ENCODE measurements at regions of chr6 and their contacts with region 1.

Region 1: DNA sequence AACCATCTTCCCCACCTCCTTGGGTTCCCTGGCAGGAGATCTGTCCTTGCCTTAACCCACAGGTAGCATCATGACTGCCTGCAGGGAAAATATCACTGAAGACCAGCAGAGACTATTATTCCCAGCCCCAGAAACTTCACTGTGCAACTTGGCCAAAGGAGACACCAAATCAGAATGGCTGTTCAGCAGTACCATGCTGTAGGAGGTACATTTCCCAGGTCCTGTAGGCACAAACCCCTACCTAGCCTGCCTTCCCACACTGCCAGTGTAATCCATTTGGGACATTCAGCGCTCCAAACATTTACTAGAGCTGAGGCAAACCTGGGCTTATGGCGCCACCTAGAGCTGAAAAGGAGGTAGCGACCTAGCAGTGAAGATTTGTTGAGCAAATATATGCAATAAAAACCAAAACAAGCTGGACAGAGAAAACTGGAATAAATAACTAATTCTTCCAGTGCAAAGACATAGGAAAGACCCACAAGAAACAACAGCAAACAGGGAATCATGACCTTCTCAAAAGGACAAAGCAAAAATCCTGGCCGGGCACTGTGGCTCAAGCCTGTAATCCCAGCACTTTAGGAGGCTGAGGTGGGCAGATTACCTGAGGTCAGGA is 60.3 kb downstream of the VTA1 start:
- DNase-seq: peak; percentile 53
- ATAC-seq: peak; percentile 45
- H3K4me3 Mint-ChIP-seq: no peak overlapping the region
- H3K27ac Mint-ChIP-seq: peak overlapping the region; percentile 53
- H3K4me1 Mint-ChIP-seq: no peaks in the 10 kb centered on the region
- H3K27me3 Mint-ChIP-seq: no peaks in the 10 kb centered on the region
- CTCF ChIP-seq: peak; percentile 77

Region 2: GRCh38 chr6:141704151-141704550 is 503.2 kb before region 1 on chr6:
- CTCF ChIA-PET with region 1: no interaction called
- POLR2A ChIA-PET with region 1: no interaction called
- intact Hi-C with region 1: no loop called
- DNase-seq: no peak
- ATAC-seq: no peak
- H3K4me3 Mint-ChIP-seq: no peak overlapping the region
- H3K27ac Mint-ChIP-seq: no peak overlapping the region
- H3K4me1 Mint-ChIP-seq: no peaks in the 10 kb centered on the region
- H3K27me3 Mint-ChIP-seq: no peaks in the 10 kb centered on the region
- CTCF ChIP-seq: no peak

Region 3: DNA sequence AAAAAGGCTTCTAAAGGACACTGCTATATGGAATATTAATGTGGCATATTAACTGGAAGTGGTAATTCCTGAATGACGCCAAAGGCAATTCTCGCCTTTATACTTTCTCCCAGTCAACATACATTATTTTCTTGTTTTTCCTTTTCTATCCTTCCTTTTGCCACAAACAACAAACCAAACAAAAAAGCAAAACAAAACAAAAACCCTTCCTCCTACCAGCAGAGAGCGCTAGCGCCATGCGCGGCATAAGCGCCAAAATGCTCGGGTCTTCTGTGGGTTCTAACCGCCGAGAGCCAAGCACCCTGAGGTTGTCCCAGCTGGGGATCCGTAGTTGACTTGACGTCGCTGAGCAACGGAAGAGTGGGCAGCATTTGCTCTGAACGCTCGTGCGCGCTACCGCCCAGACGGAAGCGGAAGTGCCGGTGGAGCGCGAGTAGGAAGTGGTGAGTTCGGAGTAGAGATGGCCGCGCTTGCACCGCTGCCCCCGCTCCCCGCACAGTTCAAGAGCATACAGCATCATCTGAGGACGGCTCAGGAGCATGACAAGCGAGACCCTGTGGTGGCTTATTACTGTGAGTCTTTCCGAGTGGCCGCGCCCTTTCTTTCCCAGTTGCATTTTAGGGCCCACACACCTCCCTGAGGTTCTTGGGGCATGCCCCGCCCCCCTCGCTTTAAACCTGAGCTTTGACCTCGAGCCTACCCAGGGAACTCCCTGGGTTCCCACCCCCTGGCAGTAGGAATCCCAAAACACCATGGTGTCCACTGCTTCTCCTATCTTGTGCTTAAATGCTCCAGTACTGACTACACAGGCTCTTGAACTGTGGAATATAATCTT is 60.3 kb before region 1 on chr6 and contains the starts of genes NMBR and VTA1:
- CTCF ChIA-PET with region 1: interaction called, 27 read pairs
- POLR2A ChIA-PET with region 1: no interaction called
- intact Hi-C with region 1: loop called (anchors 2 kb)
- DNase-seq: peak; percentile 98
- ATAC-seq: peak; percentile 98
- H3K4me3 Mint-ChIP-seq: peak within 1 kb of the TSS; percentile 96
- H3K27ac Mint-ChIP-seq: peak within 1 kb of the TSS; percentile 91
- H3K4me1 Mint-ChIP-seq: peaks cover 46% of the 10 kb centered on the region
- H3K27me3 Mint-ChIP-seq: no peaks in the 10 kb centered on the region
- CTCF ChIP-seq: peak; percentile 92
- total RNA-seq, gene NMBR: not detected
- total RNA-seq, gene VTA1: 53.8 to 57.1 TPM

Region 4: DNA sequence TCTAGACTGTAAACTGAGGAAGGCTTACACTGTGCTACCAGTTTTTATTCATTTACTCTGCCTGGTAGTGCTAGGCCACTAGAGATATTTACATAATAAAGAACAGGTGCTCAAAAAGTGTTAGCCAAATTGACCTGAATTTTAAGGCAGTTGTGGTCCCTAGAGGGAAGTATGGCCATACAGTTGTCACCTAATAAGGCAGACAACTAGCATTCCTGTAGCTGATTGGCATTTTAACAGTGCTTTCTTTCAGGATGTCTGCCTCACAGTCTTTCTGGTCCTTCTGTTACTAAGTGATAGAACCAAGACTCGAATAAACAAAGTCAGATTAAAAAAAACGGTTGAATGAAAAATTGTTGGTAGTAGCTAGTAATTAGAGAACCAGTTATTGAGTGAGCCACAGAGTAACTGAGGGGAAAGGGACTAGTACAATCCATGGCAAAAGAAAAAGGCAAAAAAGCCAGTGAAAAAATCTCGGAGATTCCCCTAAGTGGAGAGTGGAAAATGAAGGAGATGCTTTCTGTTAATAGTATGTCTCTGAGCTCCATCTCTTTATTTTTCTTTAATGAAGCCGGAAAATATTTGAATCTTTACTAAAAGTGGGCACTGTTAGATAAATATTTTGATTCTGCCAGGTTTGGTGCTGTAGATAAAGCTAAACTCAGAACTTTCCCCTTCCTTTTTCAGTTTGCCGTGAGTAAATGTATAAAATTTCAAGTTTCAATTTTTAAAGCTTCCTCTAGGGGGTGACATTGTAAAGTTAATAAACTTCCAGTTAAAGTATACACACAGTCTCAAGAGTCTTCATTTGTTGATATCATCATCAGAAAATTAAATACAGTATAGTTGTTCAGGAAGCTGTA is 51.2 kb before region 1 on chr6:
- CTCF ChIA-PET with region 1: interaction called, 36 read pairs
- POLR2A ChIA-PET with region 1: interaction called, 3 read pairs
- intact Hi-C with region 1: no loop called
- DNase-seq: no peak
- ATAC-seq: peak; percentile 53
- H3K4me3 Mint-ChIP-seq: peak overlapping the region; percentile 0
- H3K27ac Mint-ChIP-seq: no peak overlapping the region
- H3K4me1 Mint-ChIP-seq: peaks cover 53% of the 10 kb centered on the region
- H3K27me3 Mint-ChIP-seq: no peaks in the 10 kb centered on the region
- CTCF ChIP-seq: peak; percentile 62

Region 5: GRCh38 chr6:142187209-142187608 is 20.2 kb before region 1 on chr6:
- CTCF ChIA-PET with region 1: interaction called, 17 read pairs
- POLR2A ChIA-PET with region 1: no interaction called
- intact Hi-C with region 1: no loop called
- DNase-seq: no peak
- ATAC-seq: no peak
- H3K4me3 Mint-ChIP-seq: no peak overlapping the region
- H3K27ac Mint-ChIP-seq: no peak overlapping the region
- H3K4me1 Mint-ChIP-seq: peaks cover 4% of the 10 kb centered on the region
- H3K27me3 Mint-ChIP-seq: no peaks in the 10 kb centered on the region
- CTCF ChIP-seq: no peak

Region 6: GRCh38 chr6:142195862-142196541 is 11.4 kb before region 1 on chr6:
- CTCF ChIA-PET with region 1: interaction called, 23 read pairs
- POLR2A ChIA-PET with region 1: no interaction called
- intact Hi-C with region 1: no loop called
- DNase-seq: no peak
- ATAC-seq: no peak
- H3K4me3 Mint-ChIP-seq: no peak overlapping the region
- H3K27ac Mint-ChIP-seq: peak overlapping the region; percentile 49
- H3K4me1 Mint-ChIP-seq: peaks cover 38% of the 10 kb centered on the region
- H3K27me3 Mint-ChIP-seq: no peaks in the 10 kb centered on the region
- CTCF ChIP-seq: no peak

Region 7: GRCh38 chr6:142218446-142218845 is 11.1 kb after region 1 on chr6:
- CTCF ChIA-PET with region 1: interaction called, 12 read pairs
- POLR2A ChIA-PET with region 1: no interaction called
- intact Hi-C with region 1: no loop called
- DNase-seq: no peak
- ATAC-seq: no peak
- H3K4me3 Mint-ChIP-seq: no peak overlapping the region
- H3K27ac Mint-ChIP-seq: no peak overlapping the region
- H3K4me1 Mint-ChIP-seq: no peaks in the 10 kb centered on the region
- H3K27me3 Mint-ChIP-seq: no peaks in the 10 kb centered on the region
- CTCF ChIP-seq: no peak

Region 8: GRCh38 chr6:142236691-142237090 is 29.3 kb after region 1 on chr6:
- CTCF ChIA-PET with region 1: interaction called, 11 read pairs
- POLR2A ChIA-PET with region 1: no interaction called
- intact Hi-C with region 1: no loop called
- DNase-seq: no peak
- ATAC-seq: no peak
- H3K4me3 Mint-ChIP-seq: no peak overlapping the region
- H3K27ac Mint-ChIP-seq: no peak overlapping the region
- H3K4me1 Mint-ChIP-seq: peaks cover 11% of the 10 kb centered on the region
- H3K27me3 Mint-ChIP-seq: no peaks in the 10 kb centered on the region
- CTCF ChIP-seq: no peak

Region 9: GRCh38 chr6:142331075-142331551 is 123.7 kb after region 1 on chr6:
- CTCF ChIA-PET with region 1: no interaction called
- POLR2A ChIA-PET with region 1: no interaction called
- intact Hi-C with region 1: no loop called
- DNase-seq: peak; percentile 62
- ATAC-seq: peak; percentile 99
- H3K4me3 Mint-ChIP-seq: peak overlapping the region; percentile 38
- H3K27ac Mint-ChIP-seq: peak overlapping the region; percentile 80
- H3K4me1 Mint-ChIP-seq: peaks cover 21% of the 10 kb centered on the region
- H3K27me3 Mint-ChIP-seq: no peaks in the 10 kb centered on the region
- CTCF ChIP-seq: no peak

Measured in activated CD8-positive, alpha-beta T cell treated with anti-CD3 and anti-CD28 coated beads for 36 hours (primary cell).